Heart left ventricle (tissue), 16 donors: ENCODE measurements at regions of chrX and their contacts with region 1.

Region 1: DNA sequence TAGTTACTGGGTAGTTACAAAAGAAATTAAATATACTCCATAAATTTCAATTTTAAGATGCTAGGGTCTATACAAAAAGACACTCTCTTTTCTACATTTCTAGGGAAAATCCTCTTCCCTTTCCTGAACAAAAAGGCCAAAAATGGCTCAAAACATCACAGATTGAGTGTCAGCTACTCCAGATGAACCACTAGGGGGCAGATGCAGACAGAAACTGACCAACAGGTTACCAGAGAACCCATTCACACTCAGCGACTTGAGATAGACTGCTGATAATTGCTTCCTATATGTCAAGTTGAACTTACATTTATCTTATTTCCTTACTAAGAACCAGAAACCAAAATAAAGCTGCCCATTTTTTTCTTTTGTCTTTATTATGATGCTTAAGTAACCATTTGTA is 83.4 kb upstream of the MID1IP1 start:
- DNase-seq: no peak
- ATAC-seq: no peak
- H3K4me3 ChIP-seq: no peak overlapping the region
- H3K27ac ChIP-seq: no peak overlapping the region
- H3K4me1 ChIP-seq: no peaks in the 10 kb centered on the region
- H3K27me3 ChIP-seq: peaks cover 0 to 13% (median 0%) of the 10 kb centered on the region in 9 donors
- CTCF ChIP-seq: peak; percentile 12 to 55 (median 47)
- POLR2A ChIP-seq: no peak

Region 2: GRCh38 chrX:38669428-38669827 is 48.4 kb before region 1 on chrX:
- intact Hi-C with region 1: loop called in 1 of 10 experiments (anchors 5 kb)
- DNase-seq: no peak
- ATAC-seq: no peak
- H3K4me3 ChIP-seq: no peak overlapping the region
- H3K27ac ChIP-seq: no peak overlapping the region
- H3K4me1 ChIP-seq: peaks cover 0 to 9% (median 0%) of the 10 kb centered on the region in 12 donors
- H3K27me3 ChIP-seq: peaks cover 0 to under 1% (median 0%) of the 10 kb centered on the region in 9 donors
- CTCF ChIP-seq: no peak
- POLR2A ChIP-seq: no peak

Region 3: GRCh38 chrX:39652336-39653131 is 934.7 kb after region 1 on chrX:
- intact Hi-C with region 1: no loop called
- DNase-seq: peak in 1 of 5 donors; percentile 22
- ATAC-seq: no peak
- H3K4me3 ChIP-seq: no peak overlapping the region
- H3K27ac ChIP-seq: no peak overlapping the region
- H3K4me1 ChIP-seq: no peaks in the 10 kb centered on the region
- H3K27me3 ChIP-seq: peaks cover 0 to 37% (median 0%) of the 10 kb centered on the region in 9 donors
- CTCF ChIP-seq: peak in 11 of 12 donors; percentile 23 to 56 (median 38)
- POLR2A ChIP-seq: no peak